K562 (cell line): ENCODE measurements at regions of chr13 and their contacts with region 1.

Region 1: GRCh38 chr13:91824416-91824815 is 426.0 kb downstream of the GPC5 start:
- DNase-seq: no peak
- ATAC-seq: no peak
- H3K4me3 ChIP-seq: no peak overlapping the region
- H3K27ac ChIP-seq: no peak overlapping the region
- H3K4me1 ChIP-seq: no peaks in the 10 kb centered on the region
- H3K27me3 ChIP-seq: no peaks in the 10 kb centered on the region
- CTCF ChIP-seq: no peak
- EP300 ChIP-seq: no peak
- POLR2A ChIP-seq: no peak
- RAD21 ChIP-seq: no peak

Region 2: DNA sequence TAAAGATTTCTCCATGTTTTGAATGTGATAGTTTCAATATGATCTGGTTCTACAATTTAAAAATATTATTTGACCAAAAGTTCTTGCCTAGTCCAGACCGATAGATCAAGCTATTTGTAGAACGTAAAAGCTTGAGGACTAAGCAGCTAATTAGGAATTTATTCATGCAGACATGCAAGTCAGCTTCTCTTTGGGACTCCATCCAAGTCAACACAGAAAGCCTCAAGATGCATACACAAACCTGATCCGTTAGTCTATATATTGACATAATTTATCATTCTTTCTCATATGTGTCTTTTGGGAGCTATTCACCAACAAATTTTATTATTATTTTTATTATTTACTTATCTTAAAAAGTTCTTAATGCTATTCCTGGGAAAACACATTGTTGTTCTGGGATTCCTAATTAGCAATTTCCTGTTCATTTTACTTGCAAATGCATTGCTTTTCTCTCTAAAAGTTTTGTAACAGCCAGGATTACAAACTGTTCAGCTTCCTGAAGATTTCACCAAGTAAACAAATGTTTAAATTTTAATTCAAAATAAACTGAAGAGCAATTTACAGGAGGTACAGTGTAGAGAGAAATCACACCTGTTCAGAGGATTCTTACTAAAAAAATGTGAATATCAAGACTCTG is 50.7 kb before region 1 on chr13:
- CTCF ChIA-PET with region 1: no interaction called
- POLR2A ChIA-PET with region 1: no interaction called
- in situ Hi-C with region 1: no loop called
- intact Hi-C with region 1: loop called (anchors 5 kb)
- DNase-seq: no peak
- ATAC-seq: no peak
- H3K4me3 ChIP-seq: no peak overlapping the region
- H3K27ac ChIP-seq: no peak overlapping the region
- H3K4me1 ChIP-seq: no peaks in the 10 kb centered on the region
- H3K27me3 ChIP-seq: no peaks in the 10 kb centered on the region
- CTCF ChIP-seq: no peak
- EP300 ChIP-seq: no peak
- POLR2A ChIP-seq: no peak
- RAD21 ChIP-seq: no peak

Region 3: DNA sequence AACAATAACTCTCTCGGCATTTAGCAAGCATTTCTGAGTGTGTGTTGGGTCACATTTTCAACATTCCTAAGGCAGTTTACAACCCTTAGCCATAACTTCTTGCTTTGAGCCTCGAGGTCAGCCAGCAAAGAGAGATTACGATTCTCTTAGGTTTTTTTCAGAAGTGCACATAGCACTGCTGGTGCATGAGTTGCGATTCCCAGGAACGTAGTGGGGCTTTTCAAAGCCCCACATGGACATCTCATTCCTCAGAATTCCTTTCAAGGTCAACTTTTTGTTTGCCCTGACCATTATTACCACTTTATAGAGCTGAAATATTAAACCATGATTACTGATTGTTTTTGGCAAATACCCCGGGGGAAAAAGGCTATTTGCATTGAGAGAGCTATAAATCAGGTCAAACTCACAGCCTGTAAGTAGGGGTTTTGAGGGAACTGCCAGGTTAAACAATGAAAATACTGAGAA is 279.3 kb after region 1 on chr13:
- CTCF ChIA-PET with region 1: no interaction called
- POLR2A ChIA-PET with region 1: no interaction called
- in situ Hi-C with region 1: no loop called
- intact Hi-C with region 1: no loop called
- DNase-seq: no peak
- ATAC-seq: no peak
- H3K4me3 ChIP-seq: no peak overlapping the region
- H3K27ac ChIP-seq: no peak overlapping the region
- H3K4me1 ChIP-seq: no peaks in the 10 kb centered on the region
- H3K27me3 ChIP-seq: no peaks in the 10 kb centered on the region
- CTCF ChIP-seq: no peak
- EP300 ChIP-seq: no peak
- POLR2A ChIP-seq: no peak
- RAD21 ChIP-seq: no peak